GM18951 (cell line): ENCODE measurements at regions of chr12 and their contacts with region 1.

Region 1: DNA sequence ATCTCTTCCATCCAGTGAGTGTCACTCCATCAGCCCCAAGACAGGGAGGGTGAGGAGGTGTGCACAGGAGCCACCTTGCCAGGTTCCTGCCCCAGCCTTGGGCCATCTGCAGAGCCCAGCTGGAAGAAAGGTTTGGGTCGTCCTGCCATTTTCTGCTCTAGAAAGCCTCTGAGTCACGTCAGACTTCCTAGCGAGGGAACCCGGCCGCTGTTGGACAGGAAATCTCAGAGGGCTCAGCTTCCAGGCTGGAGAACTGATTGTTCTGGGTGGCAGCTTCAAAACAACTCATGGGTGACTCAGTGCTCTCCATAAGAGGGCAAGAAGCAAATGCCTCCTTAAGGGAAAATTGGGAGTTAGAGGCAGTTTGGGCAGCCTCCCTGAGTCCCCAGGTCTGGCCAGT is 16.6 kb downstream of the HIP1R start:
- POLR2A ChIP-seq: no peak

Region 2: GRCh38 chr12:122646517-122647217 is 205.2 kb before region 1 on chr12:
- in situ Hi-C with region 1: no loop called
- POLR2A ChIP-seq: no peak

Region 3: GRCh38 chr12:122951979-122952892 is 100.4 kb after region 1 on chr12:
- in situ Hi-C with region 1: loop called (anchors 10 kb)
- POLR2A ChIP-seq: no peak

Region 4: GRCh38 chr12:123180171-123180570 is 328.4 kb after region 1 on chr12:
- in situ Hi-C with region 1: no loop called
- POLR2A ChIP-seq: no peak